A549 (cell line): ENCODE measurements at regions of chr2 and their contacts with region 1.

Region 1: GRCh38 chr2:161063157-161063954 is 96.9 kb upstream of the TANK start:
- DNase-seq: peak; percentile 56 to 74
- ATAC-seq: peak; percentile 94 to 98
- H3K4me3 ChIP-seq: no peak overlapping the region
- H3K27ac ChIP-seq: peak overlapping the region in 1 of 2 experiments; percentile 67; a peak in 3 of 6 replicates
- H3K4me1 ChIP-seq: peaks cover 6% of the 10 kb centered on the region; the same call in 2 of the 3 replicates
- CTCF ChIP-seq: peak; percentile 87
- EP300 ChIP-seq: no peak
- POLR2A ChIP-seq: no peak
- RAD21 ChIP-seq: peak; percentile 87 to 91

Region 2: DNA sequence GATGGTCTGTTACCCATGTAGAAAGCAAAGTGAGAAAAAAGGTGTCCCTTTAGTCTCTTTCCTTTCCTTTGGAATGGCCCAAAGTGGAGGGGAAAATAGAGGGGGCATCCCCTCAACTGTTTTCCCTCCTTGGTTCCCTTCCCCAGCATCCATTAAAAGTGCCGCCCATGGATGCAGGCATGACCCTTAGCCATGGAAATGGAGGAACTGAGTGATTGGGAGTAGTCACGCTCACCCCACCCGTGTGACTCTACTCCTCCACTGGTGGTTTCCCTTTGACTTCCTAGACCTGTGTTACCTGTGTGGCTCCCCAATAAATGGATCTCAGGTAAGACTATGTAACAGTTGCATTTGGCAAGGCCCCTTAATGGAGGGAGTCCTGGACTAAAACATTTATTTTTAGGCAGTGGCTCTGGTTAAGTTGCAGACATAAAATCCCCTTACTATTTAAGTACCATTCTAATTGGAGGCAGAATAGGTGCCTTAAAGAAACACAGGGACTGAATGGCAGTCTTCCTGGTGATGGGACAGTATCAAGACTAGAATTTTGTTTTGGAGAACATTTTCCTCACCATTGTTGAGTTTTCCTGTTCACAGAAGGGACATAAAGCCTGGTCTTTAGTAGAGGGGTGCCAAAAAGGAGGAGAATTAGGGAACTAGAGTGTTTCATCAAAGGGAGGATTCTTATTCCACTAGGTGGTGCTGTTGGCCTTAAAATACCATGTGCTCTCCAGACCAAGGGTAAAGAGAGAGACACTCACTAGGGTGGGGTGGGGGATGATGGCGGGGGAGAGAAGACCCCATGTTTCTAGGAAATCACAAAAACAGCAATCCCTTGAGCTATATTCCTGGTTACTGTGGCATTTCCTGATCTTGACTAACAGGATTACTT is 975.3 kb before region 1 on chr2:
- CTCF ChIA-PET with region 1: interaction called, 24 read pairs
- POLR2A ChIA-PET with region 1: no interaction called
- DNase-seq: peak; percentile 35 to 62
- ATAC-seq: peak; percentile 92 to 93
- H3K4me3 ChIP-seq: no peak overlapping the region
- H3K27ac ChIP-seq: peak overlapping the region; percentile 0 to 67; a peak in 3 of 6 replicates
- H3K4me1 ChIP-seq: peaks cover 10% of the 10 kb centered on the region
- CTCF ChIP-seq: peak; percentile 86
- EP300 ChIP-seq: no peak
- POLR2A ChIP-seq: no peak
- RAD21 ChIP-seq: peak; percentile 90 to 92

Region 3: GRCh38 chr2:160928854-160929620 is 134.3 kb before region 1 on chr2:
- CTCF ChIA-PET with region 1: no interaction called
- POLR2A ChIA-PET with region 1: no interaction called
- DNase-seq: no peak
- ATAC-seq: no peak
- H3K4me3 ChIP-seq: no peak overlapping the region
- H3K27ac ChIP-seq: no peak overlapping the region
- H3K4me1 ChIP-seq: peaks cover 19% of the 10 kb centered on the region
- CTCF ChIP-seq: no peak
- EP300 ChIP-seq: no peak
- POLR2A ChIP-seq: no peak
- RAD21 ChIP-seq: no peak

Region 4: GRCh38 chr2:161004379-161004778 is 59.0 kb before region 1 on chr2:
- CTCF ChIA-PET with region 1: interaction called, 31 read pairs
- POLR2A ChIA-PET with region 1: no interaction called
- DNase-seq: peak; percentile 5 to 24
- ATAC-seq: peak in 1 of 2 experiments; percentile 65; a peak in 3 of 6 replicates
- H3K4me3 ChIP-seq: no peak overlapping the region
- H3K27ac ChIP-seq: no peak overlapping the region
- H3K4me1 ChIP-seq: no peaks in the 10 kb centered on the region
- CTCF ChIP-seq: peak; percentile 47
- EP300 ChIP-seq: no peak
- POLR2A ChIP-seq: no peak
- RAD21 ChIP-seq: peak; percentile 54 to 59

Region 5: DNA sequence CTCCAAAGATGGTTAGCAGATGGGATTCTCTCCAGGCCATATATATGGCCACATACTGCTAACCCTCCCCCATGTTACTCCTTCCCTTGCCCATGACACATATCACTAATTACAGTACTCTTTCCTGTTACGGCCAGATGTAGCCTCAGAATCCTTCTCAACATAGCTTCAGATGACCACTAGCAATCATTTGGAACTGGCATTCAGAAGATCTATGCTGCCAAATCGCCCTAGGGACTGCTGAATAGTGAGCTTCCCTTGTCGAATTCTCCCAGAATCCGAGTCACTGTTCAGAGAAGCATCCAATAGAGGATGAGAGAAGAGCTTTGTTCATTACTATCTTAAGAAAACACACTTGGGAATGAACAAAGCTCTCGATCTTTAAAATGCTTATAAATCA is 24.3 kb before region 1 on chr2:
- CTCF ChIA-PET with region 1: interaction called, 11 read pairs
- POLR2A ChIA-PET with region 1: no interaction called
- DNase-seq: no peak
- ATAC-seq: no peak
- H3K4me3 ChIP-seq: no peak overlapping the region
- H3K27ac ChIP-seq: no peak overlapping the region
- H3K4me1 ChIP-seq: peaks cover 3% of the 10 kb centered on the region; the same call in 1 of the 3 replicates
- CTCF ChIP-seq: no peak
- EP300 ChIP-seq: no peak
- POLR2A ChIP-seq: no peak
- RAD21 ChIP-seq: no peak

Region 6: DNA sequence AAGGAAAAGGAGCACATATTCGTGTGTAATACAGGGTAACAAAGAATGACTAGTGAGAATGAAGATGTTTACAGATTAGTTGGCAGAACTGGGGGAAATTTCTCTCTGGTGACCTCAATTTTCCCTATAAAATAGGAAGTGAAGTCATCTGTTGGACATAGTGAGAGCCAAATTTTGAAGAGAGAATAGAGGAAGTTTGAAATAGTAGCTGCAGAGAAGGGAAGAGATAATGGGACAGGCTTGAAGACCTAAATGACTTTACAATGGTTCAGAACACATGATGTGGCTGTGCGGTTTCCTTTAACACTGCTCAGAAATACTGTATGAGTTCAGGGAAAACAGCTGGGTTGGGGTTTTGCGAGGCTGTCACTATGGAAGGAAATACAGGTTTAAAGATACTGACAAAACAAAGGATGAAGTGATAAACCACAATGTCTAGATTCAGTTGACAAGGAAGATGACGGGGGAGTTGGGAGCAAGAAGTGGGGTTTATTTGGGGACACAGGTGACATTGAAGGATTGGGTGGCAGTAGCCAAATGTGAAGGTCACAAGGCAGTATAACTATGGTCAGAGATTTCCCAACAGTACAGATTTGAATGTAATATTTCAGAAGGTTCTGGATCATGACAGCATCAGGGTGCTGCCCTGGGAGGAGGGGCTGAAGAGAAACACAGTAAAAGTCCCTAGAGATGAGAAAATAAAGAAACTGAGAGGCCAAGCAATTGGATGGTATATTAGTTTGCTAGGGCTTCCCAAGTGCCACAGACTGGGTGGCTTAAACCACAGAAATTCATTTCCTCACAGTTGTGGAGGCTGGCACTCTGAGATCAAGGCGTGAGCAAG is 14.2 kb after region 1 on chr2:
- CTCF ChIA-PET with region 1: interaction called, 26 read pairs
- POLR2A ChIA-PET with region 1: no interaction called
- DNase-seq: no peak
- ATAC-seq: no peak
- H3K4me3 ChIP-seq: no peak overlapping the region
- H3K27ac ChIP-seq: no peak overlapping the region
- H3K4me1 ChIP-seq: no peaks in the 10 kb centered on the region
- CTCF ChIP-seq: no peak
- EP300 ChIP-seq: no peak
- POLR2A ChIP-seq: no peak
- RAD21 ChIP-seq: no peak

Region 7: GRCh38 chr2:161090411-161090810 is 27.1 kb after region 1 on chr2:
- CTCF ChIA-PET with region 1: interaction called, 33 read pairs
- POLR2A ChIA-PET with region 1: no interaction called
- DNase-seq: no peak
- ATAC-seq: no peak
- H3K4me3 ChIP-seq: no peak overlapping the region
- H3K27ac ChIP-seq: no peak overlapping the region
- H3K4me1 ChIP-seq: no peaks in the 10 kb centered on the region
- CTCF ChIP-seq: no peak
- EP300 ChIP-seq: no peak
- POLR2A ChIP-seq: no peak
- RAD21 ChIP-seq: no peak